ENCODE measurements at regions of chr3 and their contacts with region 1.

Region 1: GRCh38 chr3:19866751-19867347 is 67.2 kb downstream of the EFHB start:
- DNase-seq: peak; percentile 66
- H3K4me3 Mint-ChIP-seq: no peak overlapping the region
- H3K27ac Mint-ChIP-seq: no peak overlapping the region
- H3K4me1 Mint-ChIP-seq: peaks cover 6% of the 10 kb centered on the region
- H3K27me3 Mint-ChIP-seq: peaks cover 15% of the 10 kb centered on the region
- CTCF ChIP-seq: peak; percentile 54

Region 2: GRCh38 chr3:19046440-19046839 is 820.4 kb before region 1 on chr3:
- CTCF ChIA-PET with region 1: no interaction called
- intact Hi-C with region 1: loop called (anchors 1 kb)
- DNase-seq: no peak
- H3K4me3 Mint-ChIP-seq: no peak overlapping the region
- H3K27ac Mint-ChIP-seq: no peak overlapping the region
- H3K4me1 Mint-ChIP-seq: no peaks in the 10 kb centered on the region
- H3K27me3 Mint-ChIP-seq: no peaks in the 10 kb centered on the region
- CTCF ChIP-seq: no peak

Region 3: DNA sequence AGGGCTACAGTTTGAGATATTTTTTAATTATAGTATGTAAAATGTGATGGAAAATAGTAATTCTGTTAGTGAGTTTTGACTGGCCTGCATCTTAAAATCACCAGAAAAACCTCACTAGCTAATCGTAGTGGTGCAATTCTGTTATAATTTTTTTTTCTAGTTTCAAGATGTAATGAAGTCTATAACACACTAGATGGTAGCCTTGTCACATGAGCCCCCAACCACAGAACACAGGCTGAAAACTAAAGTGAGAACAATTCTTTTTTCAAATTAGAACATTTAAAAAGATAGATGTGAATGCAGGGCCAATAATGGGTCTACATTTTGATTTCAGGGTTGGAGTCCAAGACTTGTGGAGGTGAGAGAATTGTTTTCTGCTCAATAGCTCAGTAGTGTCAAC is 801.8 kb before region 1 on chr3:
- CTCF ChIA-PET with region 1: interaction called, 4 read pairs
- intact Hi-C with region 1: loop called (anchors 1 kb)
- DNase-seq: no peak
- H3K4me3 Mint-ChIP-seq: no peak overlapping the region
- H3K27ac Mint-ChIP-seq: no peak overlapping the region
- H3K4me1 Mint-ChIP-seq: peaks cover 7% of the 10 kb centered on the region
- H3K27me3 Mint-ChIP-seq: no peaks in the 10 kb centered on the region
- CTCF ChIP-seq: no peak

Region 4: DNA sequence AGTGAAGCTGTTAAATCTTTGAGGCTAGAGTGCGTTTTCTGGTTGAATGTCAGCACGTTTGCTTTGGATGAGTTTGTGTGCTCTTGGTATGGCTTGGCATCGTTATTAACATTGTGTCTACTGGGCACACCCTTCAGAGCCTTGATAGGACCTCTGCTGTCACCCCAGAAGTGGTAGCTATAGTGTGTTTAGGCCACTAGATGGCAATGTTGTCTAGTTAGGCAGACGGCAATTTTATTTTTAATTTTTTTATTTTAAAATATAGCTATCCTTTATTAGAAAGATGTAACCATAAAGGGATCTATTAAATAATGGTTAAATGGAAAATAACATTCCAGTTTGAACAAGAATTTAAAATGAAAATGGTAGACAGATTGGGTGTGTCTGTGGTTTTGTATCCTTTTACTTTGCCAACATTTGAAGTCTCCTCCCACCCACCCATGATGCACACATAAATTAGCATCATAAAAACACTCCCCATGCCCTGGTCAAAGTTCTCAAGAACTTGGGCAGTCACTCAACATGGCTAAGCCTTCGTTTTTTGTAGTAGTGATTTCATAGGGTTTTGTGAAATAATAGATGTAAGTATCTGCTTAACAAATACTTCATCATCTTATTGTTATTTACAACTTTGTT is 517.8 kb before region 1 on chr3:
- CTCF ChIA-PET with region 1: interaction called, 31 read pairs
- intact Hi-C with region 1: loop called (anchors 2 kb)
- DNase-seq: peak; percentile 19
- H3K4me3 Mint-ChIP-seq: no peak overlapping the region
- H3K27ac Mint-ChIP-seq: no peak overlapping the region
- H3K4me1 Mint-ChIP-seq: no peaks in the 10 kb centered on the region
- H3K27me3 Mint-ChIP-seq: no peaks in the 10 kb centered on the region
- CTCF ChIP-seq: peak; percentile 56

Region 5: DNA sequence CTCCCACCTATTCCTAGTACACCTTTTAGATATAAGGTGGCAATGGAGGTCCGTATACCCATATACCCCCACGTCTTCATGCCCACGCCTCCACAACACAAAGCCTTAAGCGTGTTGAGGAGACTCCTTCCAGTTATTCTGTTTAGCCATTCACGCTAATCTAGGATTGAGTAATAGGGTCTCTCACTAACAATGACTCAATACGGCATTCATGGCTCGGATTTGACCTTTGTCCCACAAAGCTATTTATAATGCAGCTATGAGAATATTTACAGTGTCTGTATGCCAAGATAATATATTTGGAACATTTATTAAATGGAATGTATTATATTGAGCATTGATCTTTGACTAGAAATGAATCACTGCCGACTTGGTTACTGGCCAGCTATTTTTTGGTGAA is 502.7 kb before region 1 on chr3:
- CTCF ChIA-PET with region 1: no interaction called
- intact Hi-C with region 1: loop called (anchors 5 kb)
- DNase-seq: peak; percentile 29
- H3K4me3 Mint-ChIP-seq: peak overlapping the region; percentile 2
- H3K27ac Mint-ChIP-seq: peak overlapping the region; percentile 13
- H3K4me1 Mint-ChIP-seq: peaks cover 12% of the 10 kb centered on the region
- H3K27me3 Mint-ChIP-seq: no peaks in the 10 kb centered on the region
- CTCF ChIP-seq: no peak

Region 6: GRCh38 chr3:19543212-19543841 is 323.5 kb before region 1 on chr3:
- CTCF ChIA-PET with region 1: no interaction called
- intact Hi-C with region 1: loop called (anchors 10 kb)
- DNase-seq: peak; percentile 5
- H3K4me3 Mint-ChIP-seq: no peak overlapping the region
- H3K27ac Mint-ChIP-seq: no peak overlapping the region
- H3K4me1 Mint-ChIP-seq: peaks cover 11% of the 10 kb centered on the region
- H3K27me3 Mint-ChIP-seq: peaks cover 8% of the 10 kb centered on the region
- CTCF ChIP-seq: peak; percentile 51

Region 7: GRCh38 chr3:19598870-19599269 is 268.0 kb before region 1 on chr3:
- CTCF ChIA-PET with region 1: no interaction called
- intact Hi-C with region 1: no loop called
- DNase-seq: no peak
- H3K4me3 Mint-ChIP-seq: no peak overlapping the region
- H3K27ac Mint-ChIP-seq: no peak overlapping the region
- H3K4me1 Mint-ChIP-seq: no peaks in the 10 kb centered on the region
- H3K27me3 Mint-ChIP-seq: no peaks in the 10 kb centered on the region
- CTCF ChIP-seq: no peak

Region 8: DNA sequence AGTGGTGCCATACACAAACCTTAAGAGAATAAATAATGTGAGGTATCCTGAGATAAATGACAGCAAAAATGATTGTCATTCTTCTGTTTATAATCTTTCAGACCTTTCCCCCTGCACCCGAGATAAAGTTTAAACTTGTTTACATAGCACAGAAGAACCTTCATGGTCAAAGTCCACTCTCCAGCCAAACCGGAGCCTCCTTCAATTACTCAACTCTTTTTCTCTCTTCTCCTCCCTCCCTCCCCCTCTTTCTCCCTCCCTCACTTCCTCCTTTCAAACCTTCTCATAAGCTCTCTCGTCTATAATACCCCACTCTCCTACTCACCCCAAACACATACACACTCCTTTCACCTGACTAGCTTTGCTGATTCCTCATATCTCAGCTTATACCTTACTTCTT is 131.7 kb before region 1 on chr3:
- CTCF ChIA-PET with region 1: no interaction called
- intact Hi-C with region 1: loop called (anchors 10 kb)
- DNase-seq: no peak
- H3K4me3 Mint-ChIP-seq: no peak overlapping the region
- H3K27ac Mint-ChIP-seq: peak overlapping the region; percentile 5
- H3K4me1 Mint-ChIP-seq: peaks cover 21% of the 10 kb centered on the region
- H3K27me3 Mint-ChIP-seq: no peaks in the 10 kb centered on the region
- CTCF ChIP-seq: no peak

Region 9: DNA sequence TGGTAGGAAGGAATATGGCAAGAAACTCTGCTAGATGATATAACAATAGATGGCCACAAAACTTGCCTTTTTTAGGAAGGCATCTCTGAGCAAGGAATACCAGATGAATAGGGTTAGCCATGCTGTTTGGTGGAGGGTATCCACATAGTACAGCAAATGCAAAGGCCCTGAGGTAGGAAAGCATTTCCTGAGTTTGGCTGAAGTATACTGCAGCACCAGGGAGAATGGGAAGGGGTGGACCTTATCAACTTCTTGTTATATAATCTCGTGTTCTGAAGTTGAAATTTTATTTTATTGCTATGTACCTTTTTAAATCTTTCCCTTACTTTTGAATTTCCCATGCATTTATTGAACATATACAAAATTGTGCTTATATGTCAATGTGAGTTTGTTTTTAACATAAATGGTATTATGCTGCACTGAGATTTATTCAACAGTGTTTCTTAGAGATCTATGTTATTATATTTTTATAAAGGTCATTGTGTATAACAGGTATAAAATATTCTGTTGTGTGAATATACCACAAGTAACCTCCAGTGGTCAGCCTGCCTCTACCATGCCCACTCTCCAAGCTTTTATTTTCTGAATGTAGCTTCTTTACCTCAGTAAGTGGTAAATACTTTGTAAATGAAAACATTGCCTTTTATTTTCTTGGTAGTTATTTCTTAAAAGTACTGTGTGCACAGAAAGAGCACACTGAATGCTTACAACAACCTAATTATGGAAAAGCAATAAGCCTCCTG is 170.6 kb after region 1 on chr3:
- CTCF ChIA-PET with region 1: no interaction called
- intact Hi-C with region 1: no loop called
- DNase-seq: no peak
- H3K4me3 Mint-ChIP-seq: no peak overlapping the region
- H3K27ac Mint-ChIP-seq: no peak overlapping the region
- H3K4me1 Mint-ChIP-seq: peaks cover 18% of the 10 kb centered on the region
- H3K27me3 Mint-ChIP-seq: no peaks in the 10 kb centered on the region
- CTCF ChIP-seq: no peak